T-cell (primary cell): ENCODE measurements at regions of chr7 and their contacts with region 1.

Region 1: GRCh38 chr7:106153891-106154449 is 41.9 kb upstream of the SYPL1 start:
- DNase-seq: peak; percentile 26 to 83 (median 63)
- ATAC-seq: peak; percentile 91 to 96 (median 94)
- H3K4me3 ChIP-seq: no peak overlapping the region
- H3K4me3 Mint-ChIP-seq: peak overlapping the region in 1 of 3 donors; percentile 22
- H3K27ac ChIP-seq: no peak overlapping the region
- H3K27ac Mint-ChIP-seq: no peak overlapping the region
- H3K4me1 ChIP-seq: peaks cover 0 to 4% of the 10 kb centered on the region in 2 experiments
- H3K4me1 Mint-ChIP-seq: peaks cover 5 to 6% (median 5%) of the 10 kb centered on the region in 3 donors
- H3K27me3 ChIP-seq: peaks cover 0 to 26% of the 10 kb centered on the region in 2 experiments
- H3K27me3 Mint-ChIP-seq: peaks cover 22 to 24% of the 10 kb centered on the region in 2 donors

Region 2: GRCh38 chr7:106056513-106057203 is 97.3 kb before region 1 on chr7:
- CTCF ChIA-PET with region 1: interaction called, 59 to 67 read pairs
- POLR2A ChIA-PET with region 1: no interaction called
- DNase-seq: peak; percentile 29 to 85 (median 63)
- ATAC-seq: peak; percentile 89 to 98 (median 94)
- H3K4me3 ChIP-seq: no peak overlapping the region
- H3K4me3 Mint-ChIP-seq: no peak overlapping the region
- H3K27ac ChIP-seq: no peak overlapping the region
- H3K27ac Mint-ChIP-seq: no peak overlapping the region
- H3K4me1 ChIP-seq: peaks cover 0 to 19% of the 10 kb centered on the region in 2 experiments
- H3K4me1 Mint-ChIP-seq: peaks cover 16 to 30% (median 19%) of the 10 kb centered on the region in 3 donors
- H3K27me3 ChIP-seq: peaks cover 0 to 4% of the 10 kb centered on the region in 2 experiments
- H3K27me3 Mint-ChIP-seq: no peaks in the 10 kb centered on the region

Region 3: GRCh38 chr7:106071356-106071998 is 82.5 kb before region 1 on chr7:
- CTCF ChIA-PET with region 1: interaction called, 8 to 11 read pairs
- POLR2A ChIA-PET with region 1: no interaction called
- DNase-seq: peak in 34 of 35 experiments; percentile 9 to 73 (median 27)
- ATAC-seq: peak; percentile 97 to 98 (median 98)
- H3K4me3 ChIP-seq: peak overlapping the region; percentile 25 to 36
- H3K4me3 Mint-ChIP-seq: peak overlapping the region; percentile 65 to 75 (median 71)
- H3K27ac ChIP-seq: peak overlapping the region; percentile 90
- H3K27ac Mint-ChIP-seq: peak overlapping the region; percentile 97 to 98
- H3K4me1 ChIP-seq: peaks cover 20 to 47% of the 10 kb centered on the region in 2 experiments
- H3K4me1 Mint-ChIP-seq: peaks cover 60 to 69% (median 62%) of the 10 kb centered on the region in 3 donors
- H3K27me3 ChIP-seq: no peaks in the 10 kb centered on the region
- H3K27me3 Mint-ChIP-seq: no peaks in the 10 kb centered on the region

Region 4: DNA sequence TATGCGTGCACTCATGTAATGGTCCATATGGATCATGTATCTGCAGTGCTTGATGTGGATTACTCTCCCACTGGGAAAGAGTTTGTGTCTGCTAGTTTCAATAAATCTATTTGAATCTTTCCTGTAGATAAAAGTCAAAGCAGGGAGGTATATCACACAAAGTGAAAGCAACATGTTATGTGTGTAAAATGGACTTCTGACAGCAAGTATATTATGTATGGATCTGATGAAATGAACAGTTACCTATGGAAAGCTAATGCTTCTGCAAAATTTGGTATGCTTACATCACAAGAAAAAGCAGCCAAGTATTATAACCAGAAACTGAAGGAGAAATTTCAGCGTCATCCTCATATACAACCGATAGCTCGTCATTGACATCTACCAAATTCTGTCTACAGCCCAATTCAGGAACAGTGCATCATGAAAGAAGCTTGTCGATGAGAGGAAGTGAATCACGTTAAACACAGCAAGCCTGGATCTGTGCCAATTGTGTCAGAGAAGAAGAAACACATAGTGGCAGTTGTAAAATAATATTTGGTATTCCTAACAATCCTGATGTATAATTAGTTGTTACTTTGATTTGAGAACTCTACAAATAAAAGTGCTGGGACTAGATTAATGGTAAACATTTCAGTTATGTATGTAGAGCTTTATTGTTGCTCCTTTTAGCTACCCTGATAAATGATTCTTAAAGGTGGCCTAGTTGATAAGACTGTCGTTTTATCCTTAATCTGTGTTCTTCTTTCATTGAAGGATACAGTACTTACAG is 27.6 kb before region 1 on chr7:
- CTCF ChIA-PET with region 1: interaction called in 1 of 2 experiments, 10 read pairs
- POLR2A ChIA-PET with region 1: no interaction called
- DNase-seq: peak in 31 of 35 experiments; percentile 5 to 61 (median 36)
- ATAC-seq: peak; percentile 71 to 96 (median 88)
- H3K4me3 ChIP-seq: no peak overlapping the region
- H3K4me3 Mint-ChIP-seq: peak overlapping the region; percentile 44 to 65 (median 54)
- H3K27ac ChIP-seq: no peak overlapping the region
- H3K27ac Mint-ChIP-seq: peak overlapping the region in 1 of 2 donors; percentile 41
- H3K4me1 ChIP-seq: peaks cover 0 to 2% of the 10 kb centered on the region in 2 experiments
- H3K4me1 Mint-ChIP-seq: peaks cover 15 to 22% (median 18%) of the 10 kb centered on the region in 3 donors
- H3K27me3 ChIP-seq: no peaks in the 10 kb centered on the region
- H3K27me3 Mint-ChIP-seq: peaks cover 0 to 1% of the 10 kb centered on the region in 2 donors